ENCODE measurements at regions of chr11 and their contacts with region 1.

Region 1: GRCh38 chr11:64916775-64917662 is at the start of gene ATG2A:
- DNase-seq: peak; percentile 99 to 100
- H3K4me3 ChIP-seq: peak within 1 kb of the TSS; percentile 92 to 94
- H3K27ac ChIP-seq: peak within 1 kb of the TSS; percentile 75 to 76
- H3K4me1 ChIP-seq: peaks cover 6 to 19% of the 10 kb centered on the region in 2 donors
- H3K27me3 ChIP-seq: no peaks in the 10 kb centered on the region
- CTCF ChIP-seq: no peak
- total RNA-seq, gene ATG2A: 39.5 TPM

Region 2: GRCh38 chr11:64878494-64879243 is 38.4 kb before region 1 on chr11 and contains the start of gene EHD1:
- intact Hi-C with region 1: no loop called
- DNase-seq: peak; percentile 91 to 99
- H3K4me3 ChIP-seq: peak within 1 kb of the TSS; percentile 67 to 93
- H3K27ac ChIP-seq: peak within 1 kb of the TSS; percentile 89 to 92
- H3K4me1 ChIP-seq: peaks cover 13 to 30% of the 10 kb centered on the region in 2 donors
- H3K27me3 ChIP-seq: no peaks in the 10 kb centered on the region
- CTCF ChIP-seq: peak; percentile 40 to 61 (median 56)
- total RNA-seq, gene EHD1: 216 TPM

Region 3: GRCh38 chr11:65095974-65096806 is 179.2 kb after region 1 on chr11 and contains the start of gene VPS51:
- intact Hi-C with region 1: loop called (anchors 5 kb)
- DNase-seq: peak; percentile 66 to 94
- H3K4me3 ChIP-seq: peak within 1 kb of the TSS; percentile 73 to 80
- H3K27ac ChIP-seq: peak within 1 kb of the TSS; percentile 86 to 95
- H3K4me1 ChIP-seq: peaks cover 3 to 15% of the 10 kb centered on the region in 2 donors
- H3K27me3 ChIP-seq: no peaks in the 10 kb centered on the region
- CTCF ChIP-seq: peak in 1 of 3 experiments; percentile 20
- total RNA-seq, gene VPS51: 226 TPM

Region 4: GRCh38 chr11:65117216-65118096 is 200.4 kb after region 1 on chr11 and contains the start of gene ZNHIT2:
- intact Hi-C with region 1: loop called (anchors 5 kb)
- DNase-seq: peak; percentile 96 to 100
- H3K4me3 ChIP-seq: peak within 1 kb of the TSS; percentile 87 to 97
- H3K27ac ChIP-seq: peak within 1 kb of the TSS; percentile 71 to 93
- H3K4me1 ChIP-seq: peaks cover 27 to 33% of the 10 kb centered on the region in 2 donors
- H3K27me3 ChIP-seq: no peaks in the 10 kb centered on the region
- CTCF ChIP-seq: peak; percentile 92 to 97 (median 93)
- total RNA-seq, gene ZNHIT2: 35.3 TPM

Region 5: GRCh38 chr11:66749070-66749469 is 1832.1 kb after region 1 on chr11:
- intact Hi-C with region 1: no loop called
- DNase-seq: no peak
- H3K4me3 ChIP-seq: no peak overlapping the region
- H3K27ac ChIP-seq: no peak overlapping the region
- H3K4me1 ChIP-seq: peaks cover 0 to 6% of the 10 kb centered on the region in 2 donors
- H3K27me3 ChIP-seq: no peaks in the 10 kb centered on the region
- CTCF ChIP-seq: no peak